ENCODE measurements at regions of chr3 and their contacts with region 1.

Region 1: DNA sequence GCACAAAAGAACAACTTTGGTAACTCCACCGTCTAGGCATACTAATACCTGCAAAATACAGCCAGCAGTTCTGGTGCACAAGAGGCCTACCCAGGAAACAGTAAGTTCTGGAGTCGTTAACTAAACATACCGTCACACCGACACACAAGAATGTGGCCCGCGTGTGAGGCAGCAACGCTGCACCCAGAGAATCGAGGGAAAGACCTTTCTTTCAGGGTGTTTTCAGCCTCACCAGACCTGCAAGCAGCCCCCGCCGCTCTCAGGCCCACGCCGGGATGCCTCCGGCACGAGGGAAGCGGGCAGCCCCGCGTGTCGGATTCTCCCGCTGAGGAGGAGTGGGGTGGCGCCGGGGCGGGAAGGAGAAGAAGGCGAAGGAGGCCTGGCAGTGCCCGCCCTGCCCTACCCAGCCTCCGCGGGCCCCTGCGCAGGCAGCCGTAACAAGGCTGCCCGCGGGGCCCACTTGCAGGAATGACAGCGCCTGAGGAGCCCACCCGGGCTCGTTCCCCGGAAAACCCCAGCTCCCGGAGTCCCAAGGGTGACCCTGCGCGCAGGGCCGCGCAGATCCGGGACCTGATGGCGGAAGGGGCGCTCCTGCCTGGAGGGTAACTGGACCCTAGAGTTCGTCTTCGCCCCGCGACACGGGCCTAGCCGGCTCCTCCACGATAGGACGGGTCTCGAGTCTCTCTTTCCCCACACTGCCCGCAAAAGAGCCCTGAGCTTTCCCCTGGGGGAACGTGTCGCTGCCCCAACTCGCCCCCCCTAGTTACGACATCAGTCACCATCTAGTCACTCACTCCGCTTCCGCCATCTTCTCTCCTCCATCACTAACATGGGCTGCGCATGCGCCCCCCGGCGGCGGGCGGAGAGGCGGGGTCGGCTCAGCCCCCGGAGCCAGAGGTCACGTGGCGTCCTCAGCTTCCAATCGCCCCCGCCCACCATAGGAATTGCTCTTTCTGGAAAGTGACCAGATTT is at the start of gene PHC3:
- DNase-seq: peak; percentile 77 to 96 (median 91)
- ATAC-seq: peak; percentile 67
- H3K4me3 ChIP-seq: peak within 1 kb of the TSS; percentile 84 to 98
- H3K4me3 Mint-ChIP-seq: peak within 1 kb of the TSS; percentile 99
- H3K27ac ChIP-seq: peak within 1 kb of the TSS; percentile 98 to 99
- H3K27ac Mint-ChIP-seq: peak within 1 kb of the TSS; percentile 100
- H3K4me1 ChIP-seq: peaks cover 31% of the 10 kb centered on the region
- H3K4me1 Mint-ChIP-seq: peaks cover 38% of the 10 kb centered on the region
- H3K27me3 ChIP-seq: no peaks in the 10 kb centered on the region
- H3K27me3 Mint-ChIP-seq: no peaks in the 10 kb centered on the region
- CTCF ChIP-seq: no peak
- total RNA-seq, gene PHC3: 131 to 136 TPM

Region 2: GRCh38 chr3:169772897-169773828 is 408.0 kb before region 1 on chr3 and contains the start of gene MYNN:
- CTCF ChIA-PET with region 1: no interaction called
- POLR2A ChIA-PET with region 1: interaction called, 5 read pairs
- intact Hi-C with region 1: loop called in 1 of 2 experiments (anchors 1 kb)
- DNase-seq: peak; percentile 83 to 97 (median 92)
- ATAC-seq: peak; percentile 78
- H3K4me3 ChIP-seq: peak within 1 kb of the TSS; percentile 93 to 99
- H3K4me3 Mint-ChIP-seq: peak within 1 kb of the TSS; percentile 99
- H3K27ac ChIP-seq: peak within 1 kb of the TSS; percentile 97 to 100
- H3K27ac Mint-ChIP-seq: peak within 1 kb of the TSS; percentile 99
- H3K4me1 ChIP-seq: peaks cover 30% of the 10 kb centered on the region
- H3K4me1 Mint-ChIP-seq: peaks cover 50% of the 10 kb centered on the region
- H3K27me3 ChIP-seq: no peaks in the 10 kb centered on the region
- H3K27me3 Mint-ChIP-seq: no peaks in the 10 kb centered on the region
- CTCF ChIP-seq: no peak
- total RNA-seq, gene MYNN: 21.1 to 24.7 TPM

Region 3: DNA sequence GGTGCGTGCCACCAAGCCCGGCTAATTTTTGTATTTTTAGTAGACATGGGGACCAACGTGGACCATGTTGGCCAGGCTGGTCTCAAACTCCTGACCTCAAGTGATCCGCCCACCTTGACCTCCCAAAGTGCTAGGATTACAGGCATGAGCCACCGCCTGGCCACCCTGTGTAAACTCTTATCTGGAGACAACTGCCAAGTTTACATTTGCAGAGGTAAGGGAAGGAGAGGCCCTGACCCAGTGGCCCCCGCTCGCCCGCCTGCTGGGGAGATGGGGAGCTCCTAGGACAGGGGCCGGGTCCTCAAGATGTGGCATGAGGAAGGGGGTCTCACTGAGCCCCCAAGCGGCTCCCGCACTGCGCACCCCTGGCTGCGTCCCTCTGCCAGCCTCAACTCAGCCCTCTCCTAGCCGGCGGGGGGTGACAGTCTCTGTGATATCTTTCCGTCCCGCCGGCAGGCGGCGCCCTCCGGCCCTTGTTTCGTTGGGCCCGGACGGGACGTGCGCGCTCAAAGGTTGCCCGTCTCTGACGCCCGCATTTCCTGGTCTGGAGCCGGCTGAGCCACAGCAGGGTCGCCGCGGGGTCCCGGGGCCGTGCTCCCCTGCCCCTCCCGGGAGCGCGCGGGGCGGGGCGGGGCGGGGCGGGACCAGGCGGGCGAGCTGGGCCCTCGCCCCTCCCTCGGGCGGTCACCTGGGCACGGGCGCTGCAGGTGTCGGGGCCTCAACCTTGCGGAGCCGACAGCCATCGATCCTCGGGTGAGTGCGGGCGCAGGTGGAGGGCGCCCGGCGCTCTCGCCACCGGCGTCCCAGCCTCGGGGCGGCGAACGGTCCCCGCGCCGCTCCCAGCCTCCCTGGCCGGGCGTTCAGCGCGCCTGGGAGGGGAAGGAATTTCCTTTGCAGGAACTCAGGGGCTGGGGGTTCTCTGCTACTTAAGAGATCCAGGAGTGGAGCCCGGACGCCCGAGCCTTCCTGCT is 143.4 kb before region 1 on chr3 and contains the start of gene GPR160:
- CTCF ChIA-PET with region 1: no interaction called
- POLR2A ChIA-PET with region 1: no interaction called
- intact Hi-C with region 1: loop called (anchors 2 to 5 kb)
- DNase-seq: peak; percentile 61 to 89 (median 81)
- ATAC-seq: peak; percentile 73
- H3K4me3 ChIP-seq: peak within 1 kb of the TSS; percentile 73 to 82
- H3K4me3 Mint-ChIP-seq: peak within 1 kb of the TSS; percentile 88
- H3K27ac ChIP-seq: peak within 1 kb of the TSS in 1 of 2 experiments; percentile 45
- H3K27ac Mint-ChIP-seq: peak within 1 kb of the TSS; percentile 71
- H3K4me1 ChIP-seq: peaks cover 32% of the 10 kb centered on the region
- H3K4me1 Mint-ChIP-seq: peaks cover 22% of the 10 kb centered on the region
- H3K27me3 ChIP-seq: no peaks in the 10 kb centered on the region
- H3K27me3 Mint-ChIP-seq: no peaks in the 10 kb centered on the region
- CTCF ChIP-seq: peak; percentile 87
- total RNA-seq, gene GPR160: 2.9 to 3.7 TPM

Region 4: GRCh38 chr3:170162630-170163029 is 18.6 kb before region 1 on chr3:
- CTCF ChIA-PET with region 1: no interaction called
- POLR2A ChIA-PET with region 1: interaction called, 3 read pairs
- intact Hi-C with region 1: loop called in 1 of 2 experiments (anchors 2 kb)
- DNase-seq: no peak
- ATAC-seq: no peak
- H3K4me3 ChIP-seq: no peak overlapping the region
- H3K4me3 Mint-ChIP-seq: no peak overlapping the region
- H3K27ac ChIP-seq: no peak overlapping the region
- H3K27ac Mint-ChIP-seq: peak overlapping the region; percentile 39
- H3K4me1 ChIP-seq: peaks cover 37% of the 10 kb centered on the region
- H3K4me1 Mint-ChIP-seq: peaks cover 64% of the 10 kb centered on the region
- H3K27me3 ChIP-seq: no peaks in the 10 kb centered on the region
- H3K27me3 Mint-ChIP-seq: no peaks in the 10 kb centered on the region
- CTCF ChIP-seq: no peak

Region 5: GRCh38 chr3:170357176-170357919 is 176.2 kb after region 1 on chr3 and contains the start of gene SKIL:
- CTCF ChIA-PET with region 1: no interaction called
- POLR2A ChIA-PET with region 1: interaction called, 5 read pairs
- intact Hi-C with region 1: loop called (anchors 1 to 5 kb)
- DNase-seq: peak; percentile 94 to 99 (median 97)
- ATAC-seq: peak; percentile 69
- H3K4me3 ChIP-seq: peak within 1 kb of the TSS; percentile 55 to 76
- H3K4me3 Mint-ChIP-seq: peak within 1 kb of the TSS; percentile 95
- H3K27ac ChIP-seq: peak within 1 kb of the TSS; percentile 91 to 96
- H3K27ac Mint-ChIP-seq: peak within 1 kb of the TSS; percentile 99
- H3K4me1 ChIP-seq: peaks cover 24% of the 10 kb centered on the region
- H3K4me1 Mint-ChIP-seq: peaks cover 52% of the 10 kb centered on the region
- H3K27me3 ChIP-seq: no peaks in the 10 kb centered on the region
- H3K27me3 Mint-ChIP-seq: no peaks in the 10 kb centered on the region
- CTCF ChIP-seq: no peak
- total RNA-seq, gene SKIL: 160 to 177 TPM

Region 6: GRCh38 chr3:171459942-171460724 is 1278.9 kb after region 1 on chr3 and contains the start of gene TNIK:
- CTCF ChIA-PET with region 1: no interaction called
- POLR2A ChIA-PET with region 1: no interaction called
- intact Hi-C with region 1: loop called in 1 of 2 experiments (anchors 5 kb)
- DNase-seq: peak; percentile 86 to 98 (median 92)
- ATAC-seq: peak; percentile 85
- H3K4me3 ChIP-seq: peak within 1 kb of the TSS; percentile 84 to 96
- H3K4me3 Mint-ChIP-seq: peak within 1 kb of the TSS; percentile 96
- H3K27ac ChIP-seq: peak within 1 kb of the TSS; percentile 53 to 70
- H3K27ac Mint-ChIP-seq: peak within 1 kb of the TSS; percentile 96
- H3K4me1 ChIP-seq: peaks cover 40% of the 10 kb centered on the region
- H3K4me1 Mint-ChIP-seq: peaks cover 48% of the 10 kb centered on the region
- H3K27me3 ChIP-seq: no peaks in the 10 kb centered on the region
- H3K27me3 Mint-ChIP-seq: no peaks in the 10 kb centered on the region
- CTCF ChIP-seq: peak; percentile 57
- total RNA-seq, gene TNIK: 60.8 to 65.1 TPM

Measured in CD8-positive, alpha-beta T cell (primary cell).